ENCODE measurements at regions of chr14 and their contacts with region 1.

Region 1: GRCh38 chr14:103333754-103334643 is at the start of gene EIF5:
- DNase-seq: peak; percentile 97

Region 2: DNA sequence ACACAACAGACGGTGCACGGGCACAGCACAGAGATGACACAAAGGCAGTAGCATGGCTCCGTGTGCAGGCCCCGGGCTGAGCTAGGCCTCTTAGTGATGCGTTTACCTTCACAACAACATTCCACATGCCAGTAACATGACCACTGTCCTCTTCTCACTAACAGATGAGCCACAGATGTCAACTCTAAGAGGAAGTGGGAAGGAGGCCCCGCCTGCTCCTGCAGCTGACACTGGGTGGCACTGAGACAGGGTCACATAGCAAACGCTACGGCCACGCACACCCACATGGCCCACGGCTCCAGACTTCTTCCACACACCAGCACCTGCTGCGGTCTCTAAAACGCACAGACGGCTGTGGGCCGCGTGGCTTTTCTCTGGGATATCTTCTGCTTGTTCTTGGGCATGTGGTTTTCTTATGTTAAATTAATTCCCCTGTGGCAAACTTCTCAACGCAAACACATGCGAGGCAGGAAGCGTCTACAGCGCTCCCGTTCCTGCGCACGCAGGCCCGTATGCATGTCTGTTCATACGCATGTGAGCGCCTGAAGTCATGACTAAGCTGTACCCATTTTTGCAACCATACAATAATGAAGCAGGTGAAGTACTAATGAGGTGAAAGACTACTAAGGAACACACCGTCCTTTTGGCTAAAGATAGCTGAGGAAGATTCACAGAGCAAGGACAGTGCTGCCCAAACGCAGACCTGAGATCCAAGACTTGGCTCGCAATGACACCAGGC is 384.8 kb before region 1 on chr14:
- CTCF ChIA-PET with region 1: no interaction called
- POLR2A ChIA-PET with region 1: no interaction called
- DNase-seq: no peak

Region 3: DNA sequence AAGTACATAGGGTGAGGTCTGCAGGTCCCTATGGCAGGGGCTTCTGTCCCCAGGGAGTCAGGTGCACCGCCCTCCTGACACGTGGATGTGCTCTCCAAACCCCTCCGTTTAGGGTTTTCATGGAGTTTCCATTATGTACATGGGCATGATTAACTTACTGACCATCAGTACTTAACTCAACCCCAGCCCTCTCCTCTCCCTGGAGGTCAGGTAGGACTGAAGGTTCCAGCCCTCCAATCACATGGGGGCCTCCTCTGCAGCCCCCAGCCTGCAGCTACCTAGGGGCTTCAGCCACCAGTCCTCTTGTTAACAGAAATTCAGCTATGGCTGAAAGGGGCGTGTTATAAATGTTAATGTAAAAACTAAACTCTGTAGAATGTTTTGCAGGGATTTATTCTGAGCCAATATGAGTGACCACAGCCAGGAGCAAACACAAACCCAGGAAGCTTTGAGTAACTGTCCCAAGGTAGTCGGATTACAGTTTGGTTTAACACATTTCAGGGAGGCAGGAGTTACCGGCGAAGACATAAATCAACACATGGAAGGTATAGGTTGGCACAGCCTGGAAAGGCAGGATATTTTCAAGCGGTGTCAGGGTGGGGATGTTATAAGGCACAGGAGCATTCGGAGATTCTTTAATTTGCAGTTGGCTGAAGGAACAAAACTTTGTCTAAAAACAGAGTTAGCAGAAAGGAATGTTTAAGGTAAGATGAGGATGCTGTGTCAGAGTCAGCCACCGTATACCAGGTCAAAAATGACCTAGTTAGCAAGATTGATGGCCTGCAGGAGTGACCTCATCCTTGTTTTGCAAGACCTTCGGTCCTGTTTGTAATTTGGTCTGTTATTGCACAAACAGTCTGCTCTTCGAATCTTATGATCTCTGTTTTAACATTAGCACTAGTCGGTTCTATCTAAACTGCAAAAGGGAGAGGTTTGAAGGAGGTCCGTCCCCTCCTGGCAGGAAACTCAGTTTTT is 135.6 kb before region 1 on chr14:
- CTCF ChIA-PET with region 1: no interaction called
- POLR2A ChIA-PET with region 1: no interaction called
- DNase-seq: no peak

Region 4: DNA sequence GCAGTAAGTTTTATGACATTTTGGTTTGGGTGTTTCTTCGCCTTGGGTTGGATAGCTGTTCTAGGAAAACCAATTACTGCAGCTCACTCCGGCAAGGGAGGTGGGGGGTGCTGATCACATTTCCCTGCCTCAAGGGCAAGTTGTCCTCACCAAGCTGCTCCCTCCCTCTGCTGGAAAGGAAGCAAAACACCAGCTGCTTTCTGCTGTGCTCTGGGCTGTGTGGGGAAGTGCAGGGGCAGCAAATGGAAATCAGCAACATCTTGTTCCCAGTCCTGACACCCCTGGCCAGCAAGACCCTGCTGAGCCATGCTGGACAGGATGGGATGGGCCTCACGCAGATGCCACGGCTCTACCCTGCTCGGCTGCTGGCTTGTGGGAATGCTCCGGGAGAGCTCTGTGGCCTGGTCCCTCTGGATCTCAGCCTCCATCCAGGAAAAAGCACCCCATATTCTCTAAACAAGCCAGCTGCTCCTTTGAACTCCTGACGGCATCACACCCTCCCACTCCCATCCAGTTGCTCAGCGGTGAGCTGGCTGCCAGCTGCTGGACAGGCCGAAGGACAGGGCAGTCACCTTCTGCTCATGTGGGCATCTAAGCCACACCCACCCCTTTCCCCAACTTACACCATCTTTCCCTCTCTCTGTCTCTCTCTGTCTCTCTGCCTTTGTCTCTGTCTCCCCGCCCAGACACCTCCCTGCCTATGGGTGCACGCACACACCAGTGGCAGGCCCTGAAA is 52.3 kb before region 1 on chr14:
- CTCF ChIA-PET with region 1: no interaction called
- POLR2A ChIA-PET with region 1: no interaction called
- DNase-seq: peak; percentile 66

Region 5: GRCh38 chr14:103298620-103299019 is 35.4 kb before region 1 on chr14:
- CTCF ChIA-PET with region 1: no interaction called
- POLR2A ChIA-PET with region 1: interaction called, 13 read pairs
- DNase-seq: no peak

Region 6: GRCh38 chr14:103319422-103319821 is 14.6 kb before region 1 on chr14:
- CTCF ChIA-PET with region 1: no interaction called
- POLR2A ChIA-PET with region 1: interaction called, 19 read pairs
- DNase-seq: no peak

Region 7: DNA sequence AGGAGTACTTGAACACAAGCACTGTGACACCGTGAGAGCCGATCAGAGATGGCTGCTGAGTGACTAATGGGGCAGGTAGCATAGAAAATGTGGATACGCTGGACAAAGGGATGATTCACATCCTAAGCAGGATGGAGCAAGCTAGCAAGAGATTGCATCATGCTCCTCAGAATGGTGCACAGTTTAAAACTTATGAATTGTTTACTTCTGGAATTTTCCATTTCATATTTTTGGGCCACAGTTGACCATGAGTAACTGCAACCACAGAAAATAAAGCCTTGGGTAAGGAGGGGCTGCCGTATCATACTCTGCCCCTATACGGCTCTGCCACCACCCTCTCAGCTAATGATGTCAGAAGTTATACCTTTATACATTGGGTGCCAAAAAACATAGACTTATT is 27.9 kb after region 1 on chr14:
- CTCF ChIA-PET with region 1: no interaction called
- POLR2A ChIA-PET with region 1: interaction called, 12 read pairs
- DNase-seq: no peak

Region 8: GRCh38 chr14:103385152-103385993 is 51.4 kb after region 1 on chr14 and contains the start of gene MARK3:
- CTCF ChIA-PET with region 1: interaction called, 3 read pairs
- POLR2A ChIA-PET with region 1: interaction called, 23 read pairs
- DNase-seq: peak; percentile 98

Region 9: DNA sequence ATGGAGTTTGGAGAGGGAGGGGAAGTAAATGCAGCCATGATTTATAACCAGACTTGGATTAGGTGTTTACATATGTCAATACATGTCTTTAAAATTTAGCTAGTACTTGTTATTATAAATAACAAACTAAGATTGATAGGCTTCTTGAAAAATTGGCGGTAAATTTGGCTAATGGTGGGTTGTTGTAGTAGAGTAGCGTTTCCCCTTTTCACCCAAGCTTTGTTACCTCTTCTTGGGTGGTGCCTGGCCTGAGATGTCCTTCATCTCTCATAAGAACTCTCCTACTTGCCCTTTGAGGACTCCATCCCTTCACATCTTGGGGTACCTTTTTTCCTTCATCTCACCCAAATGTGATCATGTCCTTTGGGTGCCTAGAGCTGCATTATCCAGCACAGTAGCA is 62.5 kb after region 1 on chr14:
- CTCF ChIA-PET with region 1: interaction called, 7 read pairs
- POLR2A ChIA-PET with region 1: interaction called, 14 read pairs
- DNase-seq: no peak